Sciatic nerve (tissue), 2 donors: ENCODE measurements at regions of chr1 and their contacts with region 1.

Region 1: DNA sequence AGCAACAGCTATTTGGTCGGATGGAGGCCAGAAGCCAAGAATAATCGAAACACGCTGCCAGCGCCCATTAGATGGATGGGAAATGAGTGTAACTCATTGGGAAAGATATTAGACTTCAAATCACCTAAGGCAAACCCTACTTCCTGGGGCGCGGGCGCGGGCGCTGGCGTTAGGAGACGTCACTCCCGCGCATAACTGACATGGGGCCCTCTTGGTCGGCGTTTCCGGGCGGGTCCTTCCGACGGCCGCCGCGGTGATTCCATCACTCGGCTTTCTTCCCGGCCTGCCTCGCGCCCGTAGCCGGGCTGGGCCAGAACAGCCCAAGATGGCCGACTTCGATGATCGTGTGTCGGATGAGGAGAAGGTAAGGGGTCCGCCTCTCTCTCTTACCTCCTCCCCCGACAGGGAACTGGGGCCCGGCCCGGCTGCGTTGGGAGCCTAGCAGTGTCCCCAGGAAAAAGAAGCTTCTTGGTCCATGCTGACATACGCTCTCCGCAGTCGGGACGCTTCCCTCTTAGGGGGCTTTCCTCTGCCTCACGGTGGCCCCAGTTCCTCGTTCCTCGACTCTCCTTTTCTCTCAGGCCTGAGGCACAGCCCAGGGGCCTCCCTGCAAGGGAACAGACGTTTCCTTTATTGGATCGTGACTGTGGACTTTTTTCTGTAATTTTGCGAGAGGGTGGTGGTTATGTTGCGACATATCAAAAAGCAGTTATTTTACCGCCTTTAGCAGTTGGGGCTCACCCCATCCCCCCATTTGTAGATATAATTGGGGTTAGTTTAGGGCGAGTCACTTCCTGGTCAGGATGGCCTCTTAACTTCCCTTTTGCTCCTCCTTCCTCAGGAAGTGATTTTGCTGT is at the start of gene CAPZA1:
- DNase-seq: peak; percentile 94
- ATAC-seq: peak; percentile 99
- total RNA-seq, gene CAPZA1: 108 TPM

Region 2: GRCh38 chr1:112706908-112707663 is 87.3 kb after region 1 on chr1 and contains the start of gene RHOC:
- intact Hi-C with region 1: loop called (anchors 5 kb)
- DNase-seq: peak; percentile 92
- ATAC-seq: peak; percentile 74
- total RNA-seq, gene RHOC: 241 TPM

Region 3: GRCh38 chr1:113140588-113141446 is 521.1 kb after region 1 on chr1:
- intact Hi-C with region 1: no loop called
- DNase-seq: peak; percentile 74
- ATAC-seq: peak; percentile 88